Left ventricle myocardium superior (tissue), 1 donor: ENCODE measurements at regions of chr2 and their contacts with region 1.

Region 1: DNA sequence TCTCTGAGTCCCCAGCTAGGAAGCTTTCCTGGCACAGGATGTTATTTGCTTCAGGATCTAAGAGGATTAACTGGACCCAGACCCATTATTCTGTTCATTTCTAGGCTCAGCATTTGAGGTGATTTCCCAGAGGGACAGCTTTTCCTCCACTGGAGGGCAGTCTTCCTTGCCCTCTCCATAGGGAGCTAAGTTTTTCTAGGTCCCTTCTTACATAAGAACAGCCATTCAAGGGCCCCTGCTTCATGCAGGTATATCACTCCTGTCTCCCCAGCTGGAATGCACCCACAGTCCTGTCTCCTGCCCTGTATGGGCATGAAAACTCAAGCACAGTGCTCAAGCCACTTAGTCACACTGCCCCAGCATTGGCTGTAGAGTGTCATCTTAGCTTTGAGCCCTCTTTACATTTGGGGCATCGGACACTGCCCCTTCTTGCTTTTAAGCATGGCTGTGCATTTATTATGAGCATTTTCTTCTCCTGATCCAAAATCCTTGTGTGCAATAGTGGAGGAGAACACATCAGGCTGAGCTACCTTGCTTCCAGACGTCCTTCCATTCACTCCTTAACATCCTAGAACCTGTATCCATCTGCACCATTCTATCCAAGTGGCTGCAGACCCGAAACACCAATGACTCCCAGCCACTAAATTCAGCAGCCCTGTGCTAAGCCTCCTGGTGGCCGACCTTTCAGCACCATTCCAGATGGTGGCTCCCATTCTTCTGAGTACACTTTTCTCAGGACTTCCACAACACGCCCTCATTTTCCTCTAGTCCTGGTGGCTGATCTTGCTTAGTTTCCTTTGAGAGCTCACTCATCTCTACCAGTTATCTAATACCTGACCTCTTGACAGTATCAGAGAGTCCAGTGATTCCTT is 80.0 kb downstream of the COPS8 start:
- DNase-seq: no peak
- ATAC-seq: peak; percentile 4

Region 2: DNA sequence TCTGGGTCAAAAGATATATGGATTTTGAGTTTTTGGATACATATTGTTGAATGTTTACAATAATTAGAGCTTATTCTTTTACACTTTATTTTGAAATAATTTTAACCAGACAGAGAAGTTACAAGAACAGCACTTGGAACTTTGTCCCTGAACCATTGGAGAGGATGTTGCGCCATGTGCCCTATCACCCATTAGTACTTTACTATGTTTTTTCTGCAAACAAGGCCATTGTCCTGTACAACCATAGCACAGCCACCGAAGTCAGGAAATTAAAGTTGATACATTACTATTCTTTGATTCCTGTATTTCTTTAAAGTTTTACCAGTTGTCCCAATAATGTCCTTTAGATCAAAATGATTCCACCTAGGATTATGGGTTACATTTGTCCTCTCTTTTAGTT is 407.2 kb before region 1 on chr2:
- intact Hi-C with region 1: no loop called
- DNase-seq: no peak
- ATAC-seq: no peak

Region 3: GRCh38 chr2:237073552-237073951 is 92.1 kb before region 1 on chr2:
- intact Hi-C with region 1: no loop called
- DNase-seq: no peak
- ATAC-seq: peak; percentile 73

Region 4: GRCh38 chr2:237280229-237280628 is 114.6 kb after region 1 on chr2:
- intact Hi-C with region 1: no loop called
- DNase-seq: no peak
- ATAC-seq: peak; percentile 31

Region 5: GRCh38 chr2:237408335-237409000 is 242.8 kb after region 1 on chr2:
- intact Hi-C with region 1: loop called (anchors 10 kb)
- DNase-seq: peak; percentile 69
- ATAC-seq: peak; percentile 35

Region 6: GRCh38 chr2:237674731-237675276 is 509.2 kb after region 1 on chr2:
- intact Hi-C with region 1: no loop called
- DNase-seq: peak; percentile 87
- ATAC-seq: peak; percentile 82